Common myeloid progenitor, CD34-positive (primary cell): ENCODE measurements at regions of chr1 and their contacts with region 1.

Region 1: GRCh38 chr1:44807262-44808062 is at the start of gene DYNLT4:
- DNase-seq: peak; percentile 92 to 95 (median 95)
- H3K4me3 ChIP-seq: peak within 1 kb of the TSS in 3 of 7 experiments; percentile 34 to 54 (median 48)
- H3K27ac ChIP-seq: peak within 1 kb of the TSS; percentile 92 to 97
- H3K4me1 ChIP-seq: peaks cover 11 to 65% (median 62%) of the 10 kb centered on the region in 4 experiments
- H3K27me3 ChIP-seq: no peaks in the 10 kb centered on the region

Region 2: GRCh38 chr1:44786138-44786840 is 21.2 kb before region 1 on chr1:
- CTCF ChIA-PET with region 1: interaction called, 43 read pairs
- POLR2A ChIA-PET with region 1: interaction called, 6 read pairs
- DNase-seq: peak; percentile 76 to 85 (median 85)
- H3K4me3 ChIP-seq: peak overlapping the region in 6 of 7 experiments; percentile 23 to 76 (median 58)
- H3K27ac ChIP-seq: no peak overlapping the region
- H3K4me1 ChIP-seq: peaks cover 8 to 35% (median 30%) of the 10 kb centered on the region in 4 experiments
- H3K27me3 ChIP-seq: no peaks in the 10 kb centered on the region